Dendritic cell treated with granulocyte-macrophage colony-stimulating factor and Interleukin-4, amounts not matched to agents 40 ng/mL and 50 ng/mL, for 4 days (primary cell): ENCODE measurements at regions of chr2 and their contacts with region 1.

Region 1: DNA sequence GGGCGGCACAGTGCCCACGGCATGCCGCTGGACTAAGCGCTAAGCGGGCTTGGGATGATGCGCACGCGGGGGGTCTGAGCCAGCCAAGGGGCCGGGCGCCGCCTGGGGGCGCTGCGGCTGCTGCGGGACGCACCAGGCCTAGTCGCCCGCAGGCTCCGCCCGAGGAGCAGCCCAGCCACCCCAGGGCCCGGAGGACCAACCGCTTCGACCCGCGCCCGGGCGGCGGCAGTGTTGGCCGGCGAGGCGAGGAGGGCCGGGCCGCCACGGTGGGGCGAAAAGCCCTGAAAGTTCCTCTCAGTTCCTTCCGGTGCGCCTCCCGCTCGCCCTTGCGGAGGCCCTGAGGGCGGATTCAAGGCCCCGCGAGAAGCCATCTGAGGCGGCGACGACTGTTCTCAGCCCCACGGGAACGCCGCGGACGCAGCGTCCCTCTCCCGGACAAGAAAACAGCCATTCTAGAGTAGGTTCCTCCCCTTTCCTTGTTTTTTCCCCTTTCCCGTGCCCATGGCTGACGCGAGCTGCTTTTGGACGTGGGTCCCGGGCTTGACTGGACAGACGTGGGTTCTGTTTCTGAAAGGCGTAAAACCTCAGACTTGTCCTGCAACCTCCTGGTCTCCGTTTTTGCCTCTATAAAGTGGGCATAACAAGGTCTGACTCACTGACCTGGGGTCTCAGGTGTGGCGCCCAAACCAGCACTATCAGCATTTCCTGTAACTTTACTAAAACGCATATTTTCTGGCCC is at the start of gene ANKAR:
- H3K4me3 Mint-ChIP-seq: peak within 1 kb of the TSS; percentile 83
- H3K27ac Mint-ChIP-seq: peak within 1 kb of the TSS; percentile 96
- H3K4me1 Mint-ChIP-seq: peaks cover 24% of the 10 kb centered on the region
- H3K27me3 Mint-ChIP-seq: no peaks in the 10 kb centered on the region

Region 2: GRCh38 chr2:189698020-189698887 is 23.7 kb after region 1 on chr2:
- intact Hi-C with region 1: loop called (anchors 1 kb)
- H3K4me3 Mint-ChIP-seq: no peak overlapping the region
- H3K27ac Mint-ChIP-seq: no peak overlapping the region
- H3K4me1 Mint-ChIP-seq: no peaks in the 10 kb centered on the region
- H3K27me3 Mint-ChIP-seq: no peaks in the 10 kb centered on the region

Region 3: GRCh38 chr2:189836657-189837056 is 162.1 kb after region 1 on chr2:
- intact Hi-C with region 1: no loop called
- H3K4me3 Mint-ChIP-seq: no peak overlapping the region
- H3K27ac Mint-ChIP-seq: peak overlapping the region; percentile 86
- H3K4me1 Mint-ChIP-seq: peaks cover 28% of the 10 kb centered on the region
- H3K27me3 Mint-ChIP-seq: no peaks in the 10 kb centered on the region

Region 4: DNA sequence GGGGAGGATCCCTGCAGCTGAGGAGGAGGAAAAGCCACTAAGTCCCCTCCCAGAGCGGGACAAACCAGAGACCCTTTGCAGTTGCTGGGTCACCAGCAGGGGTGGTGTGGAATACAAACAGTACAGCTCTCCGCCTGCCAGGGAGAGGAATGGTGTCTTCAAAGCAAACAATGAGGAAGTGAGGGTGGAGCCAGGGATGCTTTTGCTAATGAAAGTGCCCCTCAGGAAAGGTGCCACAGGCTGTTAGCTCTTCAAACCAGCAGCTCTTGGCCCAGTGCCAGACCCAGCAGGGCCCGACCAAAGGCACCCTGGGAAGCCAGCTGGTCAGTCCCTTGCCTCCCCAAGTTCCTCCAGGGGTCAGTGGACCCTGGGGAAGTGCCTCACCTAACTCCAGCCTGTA is 542.3 kb after region 1 on chr2:
- intact Hi-C with region 1: no loop called
- H3K4me3 Mint-ChIP-seq: no peak overlapping the region
- H3K27ac Mint-ChIP-seq: no peak overlapping the region
- H3K4me1 Mint-ChIP-seq: peaks cover 7% of the 10 kb centered on the region
- H3K27me3 Mint-ChIP-seq: no peaks in the 10 kb centered on the region